ENCODE measurements at regions of chr17 and their contacts with region 1.

Region 1: GRCh38 chr17:18309202-18309601 is 5.6 kb downstream of the TOP3A start:
- DNase-seq: no peak
- ATAC-seq: no peak
- H3K4me3 ChIP-seq: no peak overlapping the region
- H3K27ac ChIP-seq: no peak overlapping the region
- H3K4me1 ChIP-seq: peaks cover 0 to 3% of the 10 kb centered on the region in 2 experiments; a peak in 2 of 5 replicates
- H3K27me3 ChIP-seq: no peaks in the 10 kb centered on the region
- CTCF ChIP-seq: no peak
- EP300 ChIP-seq: no peak
- POLR2A ChIP-seq: no peak
- RAD21 ChIP-seq: no peak

Region 2: GRCh38 chr17:17535957-17536356 is 773.2 kb before region 1 on chr17:
- CTCF ChIA-PET with region 1: no interaction called
- POLR2A ChIA-PET with region 1: no interaction called
- in situ Hi-C with region 1: no loop called
- intact Hi-C with region 1: no loop called
- DNase-seq: no peak
- ATAC-seq: no peak
- H3K4me3 ChIP-seq: no peak overlapping the region
- H3K27ac ChIP-seq: no peak overlapping the region
- H3K4me1 ChIP-seq: peaks cover 5 to 22% of the 10 kb centered on the region in 2 experiments; a peak in 4 of 5 replicates
- H3K27me3 ChIP-seq: no peaks in the 10 kb centered on the region
- CTCF ChIP-seq: no peak
- EP300 ChIP-seq: no peak
- POLR2A ChIP-seq: no peak
- RAD21 ChIP-seq: no peak

Region 3: DNA sequence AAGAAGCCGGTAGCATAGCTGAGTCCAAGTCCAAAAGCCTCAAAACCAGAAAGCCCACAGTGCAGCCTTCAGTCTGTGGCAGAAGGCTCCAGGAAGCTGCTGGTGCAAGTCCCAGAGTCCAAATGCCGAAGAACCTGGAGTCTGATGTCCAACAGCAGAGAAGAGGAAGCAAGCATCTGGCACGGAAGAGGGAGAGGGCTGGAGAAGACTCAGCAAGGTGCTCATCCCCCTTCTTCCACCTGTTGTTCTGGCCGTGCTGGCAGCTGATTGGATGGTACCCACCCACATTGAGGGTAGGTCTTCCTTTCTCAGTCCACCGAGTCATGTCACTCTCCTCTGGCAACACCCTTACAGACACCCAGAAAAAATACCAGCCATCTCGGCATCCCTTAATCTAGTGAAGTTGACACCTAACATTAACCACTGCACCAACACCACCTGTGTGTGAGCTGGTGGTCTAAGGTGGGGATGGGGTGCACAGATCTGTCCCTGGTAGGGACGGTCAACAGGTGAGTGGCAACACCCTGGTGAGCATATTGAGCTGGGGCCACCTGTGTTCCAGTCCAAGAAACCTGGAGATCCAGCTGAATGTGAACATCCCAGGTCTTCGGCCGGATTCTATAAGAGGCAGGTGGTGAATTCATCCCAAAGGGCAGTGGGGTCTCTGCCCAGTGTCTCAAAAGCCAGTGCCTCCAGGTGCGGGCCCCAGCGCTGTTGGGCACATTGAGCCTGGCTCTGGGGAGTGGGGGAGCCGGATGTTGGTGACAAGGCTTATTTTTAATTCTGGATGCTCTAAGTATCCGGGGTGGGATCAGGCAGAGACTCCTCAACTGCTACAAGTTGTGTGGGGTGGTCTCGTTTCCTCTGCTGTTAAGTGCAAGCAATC is 38.9 kb before region 1 on chr17:
- CTCF ChIA-PET with region 1: no interaction called
- POLR2A ChIA-PET with region 1: no interaction called
- in situ Hi-C with region 1: loop called (anchors 5 kb)
- intact Hi-C with region 1: no loop called
- DNase-seq: no peak
- ATAC-seq: no peak
- H3K4me3 ChIP-seq: no peak overlapping the region
- H3K27ac ChIP-seq: no peak overlapping the region
- H3K4me1 ChIP-seq: no peaks in the 10 kb centered on the region
- H3K27me3 ChIP-seq: no peaks in the 10 kb centered on the region
- CTCF ChIP-seq: no peak
- EP300 ChIP-seq: no peak
- POLR2A ChIP-seq: peak; percentile 46; the same call in 1 of the 2 replicates
- RAD21 ChIP-seq: no peak

Measured in K562 (cell line).